AG04449 (cell line): ENCODE measurements at regions of chr4 and their contacts with region 1.

Region 1: GRCh38 chr4:71184195-71184781 is 154.5 kb upstream of the SLC4A4 start:
- DNase-seq: no peak
- H3K4me3 ChIP-seq: no peak overlapping the region
- CTCF ChIP-seq: peak; percentile 61

Region 2: GRCh38 chr4:70948665-70949260 is 235.5 kb before region 1 on chr4:
- CTCF ChIA-PET with region 1: no interaction called
- POLR2A ChIA-PET with region 1: no interaction called
- DNase-seq: no peak
- H3K4me3 ChIP-seq: no peak overlapping the region
- CTCF ChIP-seq: no peak

Region 3: DNA sequence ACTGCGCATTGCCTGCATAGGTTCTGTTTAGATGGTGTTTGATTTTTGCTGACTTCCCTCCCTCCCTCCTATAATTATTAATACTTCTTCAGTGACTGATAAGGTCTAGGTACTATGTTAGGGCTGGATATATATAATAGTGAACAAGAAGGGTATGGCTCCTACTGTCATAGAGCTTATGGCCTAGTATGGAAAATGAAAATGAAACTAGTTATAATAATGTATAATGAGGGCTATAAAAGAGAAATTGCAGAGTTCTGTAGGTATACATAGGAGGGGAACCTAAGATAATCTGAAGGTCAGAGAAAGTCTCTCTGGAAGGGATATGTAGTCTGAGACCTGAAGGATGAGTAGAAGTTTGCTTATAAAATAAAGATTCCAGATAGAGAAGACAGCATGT is 88.7 kb before region 1 on chr4:
- CTCF ChIA-PET with region 1: no interaction called
- POLR2A ChIA-PET with region 1: no interaction called
- DNase-seq: no peak
- H3K4me3 ChIP-seq: no peak overlapping the region
- CTCF ChIP-seq: no peak

Region 4: DNA sequence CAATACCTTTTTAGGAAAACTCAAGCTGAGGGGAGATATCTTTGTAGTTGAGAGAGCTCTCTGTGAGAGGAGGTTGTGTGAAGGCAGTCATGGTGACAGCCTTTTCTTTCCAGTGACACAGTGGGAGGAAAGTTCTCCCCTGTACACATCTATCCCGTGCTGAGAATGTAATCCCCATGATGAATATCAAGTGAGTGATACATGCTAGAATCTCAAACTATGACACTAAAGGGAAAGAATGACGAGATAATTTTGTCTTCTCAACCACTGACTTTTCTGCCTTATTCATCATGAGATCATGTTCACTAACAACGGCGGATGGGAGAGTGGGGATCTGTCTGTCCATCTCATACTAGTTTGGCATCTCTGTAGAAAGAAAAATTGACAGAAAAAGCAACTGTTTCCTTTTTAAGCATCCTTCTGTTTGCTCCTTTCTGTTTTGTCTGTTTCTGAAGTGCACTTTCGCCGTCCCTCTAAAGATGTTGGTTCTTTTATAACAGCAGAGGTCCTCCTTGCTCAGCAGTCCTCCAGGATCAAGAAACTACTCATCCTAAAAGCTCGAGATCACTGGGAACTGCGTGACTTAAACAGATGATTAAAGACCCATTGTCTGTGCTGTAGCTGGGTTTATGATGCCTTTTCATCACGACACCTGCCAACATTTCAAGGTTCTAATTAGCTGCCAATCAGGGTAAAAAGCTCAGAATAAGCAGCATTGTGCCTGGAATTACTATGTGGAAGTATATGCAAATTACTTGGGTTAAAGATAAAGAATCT is 53.3 kb before region 1 on chr4:
- CTCF ChIA-PET with region 1: interaction called, 10 read pairs
- POLR2A ChIA-PET with region 1: no interaction called
- DNase-seq: peak; percentile 33
- H3K4me3 ChIP-seq: peak overlapping the region; percentile 40
- CTCF ChIP-seq: peak; percentile 12

Region 5: DNA sequence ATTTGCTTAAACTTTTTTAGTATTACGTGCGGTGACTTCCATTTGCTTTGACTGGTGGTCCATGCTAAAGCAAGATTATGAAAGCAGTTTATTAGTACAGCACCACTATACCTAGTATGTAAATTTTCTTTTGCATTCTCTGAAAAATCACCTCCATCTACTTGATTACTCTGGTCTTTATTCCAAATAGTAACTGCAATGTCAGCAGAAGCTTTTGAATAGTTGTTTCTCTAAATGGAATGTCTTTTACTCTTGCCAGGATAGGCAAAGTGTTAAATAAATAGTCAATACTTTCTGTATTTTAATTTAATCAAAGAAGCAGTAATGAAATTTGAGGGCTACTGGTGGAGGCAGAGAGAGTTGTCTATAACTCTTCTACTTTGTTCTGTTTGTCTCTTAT is 12.7 kb before region 1 on chr4:
- CTCF ChIA-PET with region 1: interaction called, 11 read pairs
- POLR2A ChIA-PET with region 1: no interaction called
- DNase-seq: no peak
- H3K4me3 ChIP-seq: no peak overlapping the region
- CTCF ChIP-seq: no peak

Region 6: DNA sequence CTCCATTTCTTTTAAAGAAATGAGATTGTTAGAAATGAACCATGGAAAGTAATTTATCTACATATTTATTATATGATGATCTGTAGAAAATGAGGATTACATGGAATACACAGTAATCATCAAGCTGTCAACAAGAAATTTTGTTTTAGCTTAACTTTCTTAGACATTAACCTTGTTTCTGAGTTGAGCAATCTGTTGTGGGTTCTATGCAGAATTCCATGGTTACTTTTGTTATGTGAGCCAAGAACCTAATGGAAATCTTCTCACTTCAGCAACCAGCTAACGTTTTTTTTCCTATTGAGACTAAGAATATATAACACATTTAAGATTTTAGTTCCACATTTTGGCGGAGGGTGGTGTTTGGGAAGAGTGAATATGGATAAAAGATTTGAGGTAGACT is 18.4 kb after region 1 on chr4:
- CTCF ChIA-PET with region 1: interaction called, 10 read pairs
- POLR2A ChIA-PET with region 1: no interaction called
- DNase-seq: no peak
- H3K4me3 ChIP-seq: no peak overlapping the region
- CTCF ChIP-seq: no peak

Region 7: DNA sequence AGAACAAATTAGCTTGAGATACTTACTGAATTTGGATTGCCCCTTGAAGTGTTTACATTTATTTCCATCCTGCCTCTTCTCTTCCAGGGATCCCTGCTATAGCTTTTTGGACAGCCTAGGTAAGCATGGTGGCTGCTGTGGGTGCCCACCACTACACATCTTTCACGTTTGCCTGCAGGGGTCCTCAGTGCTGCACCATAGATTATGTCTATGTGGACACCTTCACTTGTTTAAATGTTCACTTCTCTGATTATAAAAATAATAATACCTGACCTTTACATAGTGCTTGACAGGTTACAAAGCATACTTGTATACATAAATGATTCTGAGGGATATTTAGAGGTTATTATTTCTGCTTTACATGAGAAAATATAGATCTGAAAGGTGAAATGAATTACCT is 86.6 kb after region 1 on chr4:
- CTCF ChIA-PET with region 1: interaction called, 14 read pairs
- POLR2A ChIA-PET with region 1: interaction called, 3 read pairs
- DNase-seq: no peak
- H3K4me3 ChIP-seq: no peak overlapping the region
- CTCF ChIP-seq: peak; percentile 40

Region 8: DNA sequence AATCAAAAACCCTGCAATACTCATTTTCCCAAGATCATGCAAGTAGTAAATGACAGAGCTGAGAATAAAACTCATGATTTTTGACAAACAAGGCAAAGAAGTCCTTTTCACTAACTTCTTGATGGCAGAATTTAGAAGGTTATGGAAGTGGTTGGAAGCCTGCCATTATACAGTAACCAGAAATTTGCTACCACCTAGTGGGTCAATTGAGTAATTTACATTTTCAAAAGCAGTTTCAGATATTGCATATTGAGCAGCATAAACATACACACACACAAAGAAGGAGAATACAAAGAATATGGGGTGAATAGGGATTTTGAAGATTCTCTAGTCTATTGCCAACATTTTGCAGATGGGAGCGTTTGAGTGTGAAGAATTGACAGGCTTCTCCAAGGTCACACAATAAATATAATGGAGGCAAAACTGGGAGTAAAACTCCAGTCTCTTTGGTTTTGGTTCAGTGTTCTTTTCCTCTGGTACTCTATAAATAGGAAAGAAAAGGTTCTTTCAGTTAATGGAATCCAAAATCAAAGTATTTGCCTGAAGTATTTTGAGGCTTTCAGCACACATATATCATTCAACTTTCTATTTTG is 529.4 kb after region 1 on chr4:
- CTCF ChIA-PET with region 1: interaction called, 54 read pairs
- POLR2A ChIA-PET with region 1: no interaction called
- DNase-seq: peak; percentile 36
- H3K4me3 ChIP-seq: no peak overlapping the region
- CTCF ChIP-seq: peak; percentile 50